Vagina (tissue), 2 donors: ENCODE measurements at regions of chr3 and their contacts with region 1.

Region 1: DNA sequence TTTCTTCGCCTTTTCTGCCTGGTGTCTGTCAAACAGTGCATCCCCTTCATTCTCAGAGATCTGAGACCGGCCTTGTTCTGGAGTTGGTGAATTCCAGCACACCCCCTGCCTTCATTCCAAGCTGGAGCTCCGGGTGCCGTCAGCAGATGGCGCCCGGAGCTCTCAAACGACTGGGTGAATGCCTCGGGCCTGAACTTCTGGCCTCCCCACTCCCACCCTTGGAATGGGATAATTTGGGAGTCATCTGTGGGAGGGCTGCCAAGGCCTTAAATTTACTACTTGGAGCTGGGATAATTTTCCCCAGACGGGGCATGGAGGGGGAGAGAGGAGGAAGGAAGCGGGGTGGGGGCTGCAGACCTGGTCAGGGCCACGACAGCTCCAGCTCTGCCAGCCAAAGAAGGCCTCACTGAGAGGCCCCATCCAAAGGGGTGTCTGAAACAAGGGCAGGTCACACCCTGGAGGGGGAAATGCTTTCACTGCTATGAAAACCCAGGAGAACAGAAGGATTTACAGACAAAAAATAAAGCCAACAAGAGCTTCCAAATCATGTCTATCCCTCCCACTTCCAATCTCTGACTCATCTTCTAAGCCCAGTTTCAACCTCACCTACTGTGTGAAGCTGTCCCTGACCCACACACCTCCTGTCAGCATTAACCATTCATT is 187.9 kb downstream of the OPA1 start:
- DNase-seq: peak in 1 of 2 donors; percentile 92
- H3K4me3 ChIP-seq: no peak overlapping the region
- H3K27ac ChIP-seq: peak overlapping the region; percentile 43
- H3K4me1 ChIP-seq: peaks cover 31% of the 10 kb centered on the region
- H3K27me3 ChIP-seq: no peaks in the 10 kb centered on the region
- CTCF ChIP-seq: peak; percentile 42 to 87 (median 82)
- POLR2A ChIP-seq: no peak

Region 2: GRCh38 chr3:193742628-193743027 is 38.3 kb before region 1 on chr3:
- intact Hi-C with region 1: no loop called
- DNase-seq: no peak
- H3K4me3 ChIP-seq: no peak overlapping the region
- H3K27ac ChIP-seq: no peak overlapping the region
- H3K4me1 ChIP-seq: peaks cover 16% of the 10 kb centered on the region
- H3K27me3 ChIP-seq: no peaks in the 10 kb centered on the region
- CTCF ChIP-seq: no peak
- POLR2A ChIP-seq: no peak

Region 3: GRCh38 chr3:194321700-194322640 is 541.0 kb after region 1 on chr3:
- intact Hi-C with region 1: loop called (anchors 2 kb)
- DNase-seq: no peak
- H3K4me3 ChIP-seq: peak overlapping the region in 1 of 2 donors; percentile 22
- H3K27ac ChIP-seq: peak overlapping the region; percentile 54
- H3K4me1 ChIP-seq: peaks cover 23% of the 10 kb centered on the region
- H3K27me3 ChIP-seq: no peaks in the 10 kb centered on the region
- CTCF ChIP-seq: no peak
- POLR2A ChIP-seq: no peak